Panc1 (cell line): ENCODE measurements at regions of chr2 and their contacts with region 1.

Region 1: GRCh38 chr2:64653349-64654062 is at the start of gene SERTAD2:
- DNase-seq: no peak
- ATAC-seq: peak; percentile 87
- H3K4me3 ChIP-seq: peak within 1 kb of the TSS; percentile 76 to 80
- H3K27ac ChIP-seq: peak within 1 kb of the TSS; percentile 94
- H3K4me1 ChIP-seq: peaks cover 49% of the 10 kb centered on the region
- H3K27me3 ChIP-seq: no peaks in the 10 kb centered on the region
- CTCF ChIP-seq: peak; percentile 47
- total RNA-seq, gene SERTAD2: 24.3 TPM

Region 2: GRCh38 chr2:64727013-64727767 is 73.7 kb after region 1 on chr2:
- CTCF ChIA-PET with region 1: no interaction called
- POLR2A ChIA-PET with region 1: interaction called, 3 read pairs
- in situ Hi-C with region 1: no loop called
- intact Hi-C with region 1: loop called (anchors 10 kb)
- DNase-seq: no peak
- ATAC-seq: peak; percentile 35
- H3K4me3 ChIP-seq: no peak overlapping the region; a peak in 1 of 4 replicates
- H3K27ac ChIP-seq: peak overlapping the region; percentile 82
- H3K4me1 ChIP-seq: peaks cover 58% of the 10 kb centered on the region
- H3K27me3 ChIP-seq: no peaks in the 10 kb centered on the region
- CTCF ChIP-seq: no peak

Region 3: GRCh38 chr2:64837959-64838591 is 184.6 kb after region 1 on chr2:
- CTCF ChIA-PET with region 1: no interaction called
- POLR2A ChIA-PET with region 1: interaction called, 12 read pairs
- in situ Hi-C with region 1: no loop called
- intact Hi-C with region 1: no loop called
- DNase-seq: no peak
- ATAC-seq: peak; percentile 35
- H3K4me3 ChIP-seq: no peak overlapping the region
- H3K27ac ChIP-seq: peak overlapping the region; percentile 65
- H3K4me1 ChIP-seq: peaks cover 9% of the 10 kb centered on the region
- H3K27me3 ChIP-seq: no peaks in the 10 kb centered on the region
- CTCF ChIP-seq: no peak

Region 4: GRCh38 chr2:65129826-65130663 is 476.5 kb after region 1 on chr2 and contains the start of gene RAB1A:
- CTCF ChIA-PET with region 1: interaction called, 10 read pairs
- POLR2A ChIA-PET with region 1: no interaction called
- in situ Hi-C with region 1: no loop called
- intact Hi-C with region 1: no loop called
- DNase-seq: peak; percentile 97
- ATAC-seq: peak; percentile 97
- H3K4me3 ChIP-seq: peak within 1 kb of the TSS; percentile 83 to 91
- H3K27ac ChIP-seq: peak within 1 kb of the TSS; percentile 86
- H3K4me1 ChIP-seq: peaks cover 18% of the 10 kb centered on the region
- H3K27me3 ChIP-seq: no peaks in the 10 kb centered on the region
- CTCF ChIP-seq: no peak
- total RNA-seq, gene RAB1A: 128 TPM

Region 5: DNA sequence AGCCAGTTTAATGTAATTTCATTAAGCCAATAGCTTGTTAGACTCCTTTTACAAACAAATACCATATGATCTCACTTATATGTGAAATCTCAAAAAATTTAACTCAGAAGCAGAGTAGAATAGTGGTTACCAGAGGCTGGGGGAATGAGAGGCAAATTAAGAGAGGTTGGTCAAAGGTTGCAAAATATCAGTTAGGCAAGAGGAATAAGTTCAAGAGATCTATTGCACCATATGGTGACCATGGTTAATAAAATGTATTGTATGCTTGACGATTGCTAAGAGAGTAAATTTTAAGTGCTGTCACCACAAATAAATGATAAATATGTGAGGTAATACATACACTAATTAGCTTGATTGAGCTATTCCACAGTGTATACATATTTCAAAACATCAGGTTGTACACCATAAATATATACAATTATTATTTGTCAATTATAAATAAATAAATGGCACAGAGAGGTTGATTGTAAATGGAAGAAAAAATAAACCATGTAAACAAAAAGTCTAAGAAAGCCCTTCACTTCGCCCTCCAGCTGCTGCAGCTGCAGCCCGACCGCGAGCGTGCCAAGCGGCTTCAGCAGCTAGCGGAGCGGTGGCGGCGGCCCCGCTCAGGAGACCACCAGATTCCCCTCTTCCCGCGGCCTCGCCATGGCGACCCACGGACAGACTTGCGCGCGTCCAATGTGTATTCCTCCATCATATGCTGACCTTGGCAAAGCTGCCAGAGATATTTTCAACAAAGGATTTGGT is 551.1 kb after region 1 on chr2:
- CTCF ChIA-PET with region 1: interaction called, 13 read pairs
- POLR2A ChIA-PET with region 1: no interaction called
- in situ Hi-C with region 1: no loop called
- intact Hi-C with region 1: no loop called
- DNase-seq: no peak
- ATAC-seq: no peak
- H3K4me3 ChIP-seq: peak overlapping the region in 1 of 2 experiments; percentile 21; a peak in 2 of 4 replicates
- H3K27ac ChIP-seq: no peak overlapping the region
- H3K4me1 ChIP-seq: no peaks in the 10 kb centered on the region
- H3K27me3 ChIP-seq: peaks cover 4% of the 10 kb centered on the region
- CTCF ChIP-seq: no peak